Left colon (tissue), 2 donors: ENCODE measurements at regions of chr3 and their contacts with region 1.

Region 1: GRCh38 chr3:101809178-101810021 is 30.4 kb downstream of the NXPE3 start:
- DNase-seq: peak in 1 of 2 donors; percentile 31
- ATAC-seq: peak; percentile 69

Region 2: GRCh38 chr3:101849721-101850245 is 40.4 kb after region 1 on chr3:
- intact Hi-C with region 1: loop called in 1 of 2 experiments (anchors 5 kb)
- DNase-seq: peak; percentile 35 to 66
- ATAC-seq: peak; percentile 13

Region 3: DNA sequence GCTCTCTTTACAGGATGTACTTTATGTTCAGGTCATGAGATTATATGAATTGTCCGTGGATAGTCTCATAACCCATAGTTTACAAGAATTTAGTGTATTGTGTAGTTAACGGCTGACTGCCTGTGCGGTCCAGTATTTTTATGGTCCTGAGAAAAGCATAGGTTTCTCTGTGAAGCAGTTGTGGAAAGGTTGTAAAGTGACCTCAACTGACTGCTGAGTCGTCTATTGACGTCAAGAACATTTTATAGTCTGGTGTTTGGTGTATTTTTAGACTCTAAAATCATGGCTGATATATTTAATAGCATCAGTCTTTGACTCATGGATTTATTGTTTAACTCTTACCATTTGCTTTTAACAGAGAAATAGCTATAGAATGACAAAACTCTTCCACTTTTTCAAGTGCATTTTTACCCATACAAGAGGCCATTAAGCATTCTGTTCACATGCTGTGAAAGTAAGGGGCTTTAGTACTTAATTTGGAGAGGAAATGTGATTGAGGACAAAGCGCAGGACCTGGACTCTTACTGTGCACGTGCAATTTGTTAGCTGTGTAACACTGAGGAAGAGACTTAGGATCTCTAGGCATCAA is 280.6 kb after region 1 on chr3:
- intact Hi-C with region 1: loop called in 1 of 2 experiments (anchors 10 kb)
- DNase-seq: peak in 1 of 2 donors; percentile 61
- ATAC-seq: peak; percentile 90

Region 4: DNA sequence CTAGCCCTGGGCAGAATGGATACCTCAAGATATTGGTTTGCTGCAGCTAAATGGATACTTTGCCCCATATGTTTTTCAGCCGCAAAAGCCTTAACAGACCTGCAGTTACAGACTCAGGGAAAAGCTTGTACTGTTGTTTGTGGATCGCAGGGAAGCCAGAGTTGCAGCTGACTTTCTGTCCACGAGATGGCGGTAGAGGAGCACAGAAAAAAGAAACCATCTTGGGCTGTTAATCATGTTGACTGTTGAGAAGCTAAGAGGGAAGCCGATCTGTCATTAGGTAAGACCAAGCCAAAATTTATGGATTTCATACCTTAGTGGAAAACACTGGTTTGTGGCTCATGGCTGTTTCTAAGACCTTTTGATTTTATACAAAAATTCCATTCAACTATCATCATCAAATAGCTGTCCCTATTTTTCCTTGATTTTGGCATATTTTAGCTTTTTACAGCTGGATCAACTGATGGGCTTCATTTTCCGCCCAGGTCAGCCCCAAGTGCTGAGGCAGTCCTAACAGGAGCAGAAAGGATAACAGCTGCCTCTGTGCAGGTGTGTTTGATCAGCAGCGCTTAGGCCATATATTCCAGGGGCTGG is 419.8 kb after region 1 on chr3:
- intact Hi-C with region 1: loop called (anchors 2 to 10 kb)
- DNase-seq: peak; percentile 39 to 76
- ATAC-seq: peak; percentile 73